Aorta (tissue), 5 donors: ENCODE measurements at regions of chr5 and their contacts with region 1.

Region 1: DNA sequence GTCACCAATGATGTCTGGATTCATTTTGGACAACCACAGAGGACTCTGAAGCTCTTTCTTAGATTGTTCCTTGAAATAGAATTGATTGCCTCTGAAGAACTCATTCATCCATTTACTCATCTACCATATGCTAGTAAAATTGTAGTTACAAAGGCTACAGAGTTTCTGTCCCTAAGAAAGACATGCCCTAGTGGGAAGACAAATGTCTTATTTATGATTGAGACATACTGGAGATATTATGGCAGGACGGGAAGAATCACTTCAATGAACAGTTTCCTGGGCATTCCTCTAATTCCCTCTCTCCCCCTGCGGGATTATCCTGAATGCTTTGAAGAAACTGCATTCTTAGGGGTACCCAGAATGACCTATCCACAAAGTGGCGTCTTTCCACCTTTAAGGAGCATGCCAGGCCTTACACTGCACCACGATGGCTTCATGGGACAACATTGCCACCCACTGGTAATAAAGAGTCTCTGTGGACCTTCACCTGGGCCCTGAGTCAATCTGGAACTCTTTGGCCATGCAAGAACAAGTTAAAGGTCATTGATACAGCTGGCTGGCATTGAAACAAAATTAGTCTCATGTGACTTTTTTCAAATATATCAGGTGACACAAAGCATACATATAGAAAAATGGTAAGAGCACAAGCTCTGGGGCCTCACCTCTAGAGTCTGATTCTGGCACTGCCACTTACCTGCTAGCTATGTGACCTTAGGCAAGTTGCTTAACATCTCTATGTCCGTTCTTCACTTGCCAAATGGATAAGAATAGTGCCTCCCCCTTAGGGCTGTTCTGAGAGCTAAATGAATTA is 32.1 kb downstream of the ANKRD55 start:
- DNase-seq: peak in 1 of 2 donors; percentile 54
- ATAC-seq: peak; percentile 86
- H3K4me3 ChIP-seq: no peak overlapping the region
- H3K27ac ChIP-seq: no peak overlapping the region
- H3K4me1 ChIP-seq: no peaks in the 10 kb centered on the region
- H3K27me3 ChIP-seq: no peaks in the 10 kb centered on the region

Region 2: DNA sequence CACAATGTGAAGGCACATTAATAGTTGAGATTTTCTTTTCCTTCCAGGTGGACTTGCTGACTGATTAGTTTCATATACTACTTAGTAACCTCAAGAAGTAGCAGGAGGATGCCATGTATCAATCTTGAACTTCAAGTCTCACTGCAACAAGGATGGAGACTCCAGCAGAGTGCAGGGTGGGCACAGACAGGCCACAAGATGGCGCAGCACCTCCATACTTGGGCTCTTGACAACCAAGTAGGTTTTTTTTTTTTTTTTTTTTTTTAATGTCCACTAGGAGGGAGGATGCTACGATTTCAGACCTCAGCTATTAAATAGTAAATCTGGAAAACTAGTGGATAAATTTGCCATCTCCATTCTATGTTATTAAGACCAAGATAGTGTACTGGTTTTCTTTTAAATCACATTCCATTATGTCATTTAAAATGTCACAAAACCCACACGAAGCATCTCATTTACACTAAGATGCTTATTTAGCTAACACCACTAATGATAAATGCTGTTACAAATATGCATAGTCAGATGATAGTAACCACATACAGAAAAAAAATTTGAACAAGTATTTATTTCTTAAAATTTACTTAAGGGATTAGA is 264.9 kb before region 1 on chr5:
- intact Hi-C with region 1: loop called (anchors 2 to 5 kb)
- DNase-seq: peak; percentile 87 to 92
- ATAC-seq: peak; percentile 83
- H3K4me3 ChIP-seq: no peak overlapping the region
- H3K27ac ChIP-seq: no peak overlapping the region
- H3K4me1 ChIP-seq: no peaks in the 10 kb centered on the region
- H3K27me3 ChIP-seq: no peaks in the 10 kb centered on the region

Region 3: DNA sequence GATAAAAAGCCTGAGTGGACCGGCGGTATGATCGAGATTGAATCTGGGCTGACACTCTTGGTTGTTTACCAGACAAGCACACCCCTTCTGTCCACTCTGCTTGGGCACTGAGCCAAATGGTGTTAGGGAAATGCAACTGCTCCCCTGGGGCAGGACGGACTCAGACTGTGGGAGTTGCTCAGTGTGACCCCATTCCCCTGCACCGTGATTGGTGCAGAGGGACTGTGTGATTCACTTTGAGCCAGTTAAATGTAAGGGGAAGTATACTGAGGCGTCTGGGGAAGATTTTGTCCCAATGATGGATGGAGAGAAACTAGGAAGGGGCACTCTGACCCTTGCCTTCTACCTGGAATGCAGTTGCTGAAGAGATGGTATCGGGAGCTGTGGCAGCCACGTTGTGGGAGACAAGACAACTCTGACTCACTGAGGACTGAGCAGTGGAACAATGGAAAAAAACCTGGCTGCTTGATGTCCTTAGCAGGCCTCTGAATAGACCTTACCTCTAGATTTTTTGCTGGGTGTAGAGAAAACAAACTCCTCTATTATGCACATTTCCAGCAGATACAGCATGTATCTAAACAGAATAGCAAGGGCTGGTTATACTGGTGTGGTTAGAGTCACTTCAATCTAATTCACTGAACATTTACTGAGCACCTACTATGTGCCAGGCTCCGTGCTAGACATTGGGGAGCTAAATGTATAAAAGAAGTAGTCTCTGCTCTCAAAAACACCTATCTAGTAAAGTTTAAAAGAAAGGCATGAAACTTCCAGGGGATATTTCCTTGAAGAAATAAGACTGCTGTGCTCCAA is 228.2 kb after region 1 on chr5:
- intact Hi-C with region 1: no loop called
- DNase-seq: no peak
- ATAC-seq: no peak
- H3K4me3 ChIP-seq: no peak overlapping the region
- H3K27ac ChIP-seq: no peak overlapping the region
- H3K4me1 ChIP-seq: peaks cover 0 to 5% of the 10 kb centered on the region in 2 donors
- H3K27me3 ChIP-seq: no peaks in the 10 kb centered on the region